IMR-90 (cell line): ENCODE measurements at regions of chr7 and their contacts with region 1.

Region 1: GRCh38 chr7:117399820-117400422 is 27.4 kb downstream of the ASZ1 start:
- DNase-seq: peak; percentile 5
- ATAC-seq: no peak
- H3K4me3 ChIP-seq: no peak overlapping the region
- H3K27ac ChIP-seq: no peak overlapping the region
- H3K4me1 ChIP-seq: peaks cover 2% of the 10 kb centered on the region; the same call in 1 of the 2 replicates
- H3K27me3 ChIP-seq: no peaks in the 10 kb centered on the region
- CTCF ChIP-seq: peak; percentile 58
- POLR2A ChIP-seq: no peak
- RAD21 ChIP-seq: peak; percentile 61

Region 2: GRCh38 chr7:117673839-117674238 is 273.9 kb after region 1 on chr7:
- CTCF ChIA-PET with region 1: no interaction called
- POLR2A ChIA-PET with region 1: no interaction called
- dilution Hi-C with region 1: no loop called
- in situ Hi-C with region 1: no loop called
- intact Hi-C with region 1: loop called (anchors 2 kb)
- DNase-seq: peak; percentile 67
- ATAC-seq: peak; percentile 73
- H3K4me3 ChIP-seq: no peak overlapping the region
- H3K27ac ChIP-seq: no peak overlapping the region
- H3K4me1 ChIP-seq: peaks cover 11% of the 10 kb centered on the region; the same call in 1 of the 2 replicates
- H3K27me3 ChIP-seq: peaks cover 2% of the 10 kb centered on the region; the same call in 1 of the 2 replicates
- CTCF ChIP-seq: peak; percentile 57
- POLR2A ChIP-seq: no peak
- RAD21 ChIP-seq: peak; percentile 51

Region 3: DNA sequence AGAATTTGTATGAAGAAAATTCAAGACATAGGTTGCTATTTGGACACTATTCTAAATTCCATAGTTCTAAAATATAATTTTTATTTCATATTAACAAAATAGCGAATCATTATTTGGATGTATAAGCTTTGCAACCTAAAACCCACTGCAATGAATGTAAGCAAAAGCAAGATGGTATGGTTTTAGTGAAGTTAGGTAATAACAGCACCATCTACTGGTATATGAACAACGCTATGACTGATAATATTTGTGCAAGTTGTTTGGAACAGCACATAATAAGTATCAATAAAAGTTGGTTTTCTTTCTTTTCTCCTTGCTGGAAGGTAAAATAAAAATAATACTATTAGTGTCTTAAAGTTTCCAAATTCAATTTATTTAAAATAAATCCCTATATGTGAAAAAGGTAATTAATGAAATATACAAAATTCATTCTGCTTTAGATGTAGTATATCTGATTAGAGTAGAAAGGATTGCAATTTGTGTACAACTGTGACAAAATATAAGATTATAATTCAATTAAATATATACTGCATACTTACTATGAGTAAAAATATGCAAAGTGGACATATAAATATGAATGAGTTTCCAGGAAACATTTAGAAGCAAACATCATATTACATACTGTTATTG is 705.0 kb after region 1 on chr7:
- CTCF ChIA-PET with region 1: no interaction called
- POLR2A ChIA-PET with region 1: no interaction called
- dilution Hi-C with region 1: no loop called
- in situ Hi-C with region 1: no loop called
- intact Hi-C with region 1: loop called (anchors 1 kb)
- DNase-seq: peak; percentile 40
- ATAC-seq: peak; percentile 61
- H3K4me3 ChIP-seq: no peak overlapping the region
- H3K27ac ChIP-seq: no peak overlapping the region
- H3K4me1 ChIP-seq: no peaks in the 10 kb centered on the region
- H3K27me3 ChIP-seq: no peaks in the 10 kb centered on the region
- CTCF ChIP-seq: peak; percentile 58
- POLR2A ChIP-seq: no peak
- RAD21 ChIP-seq: peak; percentile 49

Region 4: DNA sequence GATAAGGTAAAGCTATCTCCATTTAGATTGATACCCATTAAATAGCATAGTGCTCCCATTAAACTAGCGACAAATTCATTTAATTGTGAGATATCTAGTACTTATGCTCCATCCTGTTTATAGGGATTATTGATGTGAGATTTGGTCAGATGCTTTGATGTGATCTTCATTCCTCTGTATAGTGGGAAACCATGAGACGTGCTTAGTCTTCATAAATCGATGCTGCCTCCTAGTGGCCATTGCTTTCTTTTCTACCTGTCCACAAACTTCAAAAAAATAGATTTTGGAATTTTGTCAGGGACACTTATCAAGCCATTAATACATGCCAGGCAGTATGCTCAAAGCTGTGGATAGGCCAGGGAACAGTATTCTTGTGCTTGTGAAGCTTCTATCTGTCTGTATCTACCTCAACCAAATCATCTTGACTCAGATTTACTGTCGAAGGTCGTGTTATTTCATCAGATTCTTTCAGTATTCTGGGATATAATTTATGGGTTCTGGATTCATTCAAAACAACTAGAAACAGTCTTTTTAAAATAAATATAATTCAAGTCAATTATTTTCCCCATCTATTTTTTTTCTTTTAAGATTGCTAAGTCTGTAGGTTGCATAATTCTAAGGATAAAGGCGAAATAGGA is 796.0 kb after region 1 on chr7:
- CTCF ChIA-PET with region 1: no interaction called
- POLR2A ChIA-PET with region 1: no interaction called
- dilution Hi-C with region 1: no loop called
- in situ Hi-C with region 1: no loop called
- intact Hi-C with region 1: loop called (anchors 5 kb)
- DNase-seq: peak; percentile 70
- ATAC-seq: peak; percentile 88
- H3K4me3 ChIP-seq: no peak overlapping the region
- H3K27ac ChIP-seq: no peak overlapping the region
- H3K4me1 ChIP-seq: no peaks in the 10 kb centered on the region
- H3K27me3 ChIP-seq: no peaks in the 10 kb centered on the region
- CTCF ChIP-seq: peak; percentile 72
- POLR2A ChIP-seq: no peak
- RAD21 ChIP-seq: peak; percentile 59